ENCODE measurements at regions of chr11 and their contacts with region 1.

Region 1: DNA sequence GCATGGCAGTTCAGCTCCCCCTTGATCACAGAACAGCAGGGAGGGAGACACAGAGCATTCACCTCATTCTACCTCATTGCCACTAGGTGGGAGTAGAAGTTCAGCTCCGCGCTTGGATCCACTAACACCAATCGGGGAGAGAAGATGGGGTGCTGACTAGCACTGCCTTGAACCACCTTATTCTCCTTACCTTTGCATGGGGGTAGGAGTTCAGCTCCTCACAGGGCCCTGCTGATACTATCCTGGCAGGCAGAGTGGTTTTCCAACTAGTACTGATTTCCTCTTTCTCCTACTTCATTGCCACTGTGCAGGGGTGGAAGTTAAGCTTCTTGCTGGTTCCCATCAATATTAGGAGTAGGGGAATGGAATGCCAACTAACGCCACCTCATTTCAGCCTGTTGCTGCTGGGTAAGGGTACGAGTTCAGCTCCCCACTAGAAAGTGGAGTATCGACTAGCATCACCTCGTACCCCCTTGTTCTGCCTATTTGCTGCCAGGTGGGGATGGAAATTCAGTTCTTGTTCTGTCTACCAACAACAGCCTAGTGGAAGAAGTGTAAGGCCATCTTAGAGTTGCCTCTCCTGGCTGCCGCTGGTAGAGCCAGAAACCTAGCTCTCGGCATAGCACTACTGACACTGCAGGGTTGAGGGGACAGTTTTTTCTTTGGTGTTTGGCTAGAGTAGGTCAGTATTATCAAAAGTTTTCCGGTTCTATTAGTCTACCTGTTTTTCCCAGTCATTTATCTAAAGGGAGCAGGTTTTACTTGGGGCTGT is 550.9 kb upstream of the CCDC90B start:
- DNase-seq: peak in 1 of 3 donors; percentile 46
- ATAC-seq: peak; percentile 88 to 92
- H3K4me3 ChIP-seq: no peak overlapping the region
- H3K27ac ChIP-seq: no peak overlapping the region
- H3K4me1 ChIP-seq: no peaks in the 10 kb centered on the region
- H3K27me3 ChIP-seq: no peaks in the 10 kb centered on the region

Region 2: GRCh38 chr11:84384731-84385130 is 547.7 kb after region 1 on chr11:
- intact Hi-C with region 1: loop called in 2 of 4 experiments (anchors 10 kb)
- DNase-seq: peak in 2 of 3 donors; percentile 35 to 66
- ATAC-seq: no peak
- H3K4me3 ChIP-seq: no peak overlapping the region
- H3K27ac ChIP-seq: no peak overlapping the region
- H3K4me1 ChIP-seq: no peaks in the 10 kb centered on the region
- H3K27me3 ChIP-seq: no peaks in the 10 kb centered on the region

Region 3: DNA sequence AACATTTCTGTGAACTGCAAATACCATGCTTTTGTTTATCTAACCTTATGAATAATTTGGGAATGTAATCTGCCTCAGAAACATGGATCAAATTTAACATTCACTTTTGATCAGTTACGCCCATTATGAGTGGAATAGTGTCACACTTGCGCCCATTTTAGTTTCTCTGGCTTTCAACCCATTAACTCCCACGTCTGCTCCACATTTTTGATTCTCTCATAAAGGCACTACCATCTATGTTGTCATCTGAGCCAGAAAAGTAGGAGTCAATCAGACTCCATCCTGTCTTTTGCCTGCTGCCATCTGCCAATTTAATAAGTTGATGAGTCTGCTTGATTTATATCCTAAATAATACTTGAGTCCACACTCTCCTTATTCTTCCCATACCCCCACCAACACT is 699.4 kb after region 1 on chr11:
- intact Hi-C with region 1: loop called in 1 of 4 experiments (anchors 10 kb)
- DNase-seq: no peak
- ATAC-seq: no peak
- H3K4me3 ChIP-seq: no peak overlapping the region
- H3K27ac ChIP-seq: no peak overlapping the region
- H3K4me1 ChIP-seq: no peaks in the 10 kb centered on the region
- H3K27me3 ChIP-seq: no peaks in the 10 kb centered on the region

Region 4: DNA sequence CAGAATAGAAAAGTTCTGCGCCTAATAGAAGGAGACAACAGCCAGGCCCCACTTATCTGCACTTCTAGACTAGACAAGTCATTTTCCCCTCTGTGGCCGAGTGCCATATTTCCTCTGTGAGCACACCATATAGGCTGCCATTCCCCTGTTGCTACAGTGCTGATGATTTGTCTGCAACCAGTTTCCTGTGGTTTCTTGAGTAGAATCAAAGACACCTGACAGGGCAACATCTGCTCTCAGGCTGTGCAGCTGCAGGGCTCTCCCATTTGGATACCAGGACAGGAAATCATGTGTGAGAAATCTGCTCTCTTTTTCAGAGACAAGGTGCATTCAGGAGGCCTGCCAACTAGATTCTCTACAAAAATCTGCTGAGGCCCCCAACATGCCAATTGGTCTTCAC is 910.8 kb after region 1 on chr11:
- intact Hi-C with region 1: no loop called
- DNase-seq: no peak
- ATAC-seq: no peak
- H3K4me3 ChIP-seq: no peak overlapping the region
- H3K27ac ChIP-seq: no peak overlapping the region
- H3K4me1 ChIP-seq: no peaks in the 10 kb centered on the region
- H3K27me3 ChIP-seq: no peaks in the 10 kb centered on the region

Measured in right cardiac atrium (tissue), 5 donors.